ENCODE measurements at regions of chr12 and their contacts with region 1.

Region 1: DNA sequence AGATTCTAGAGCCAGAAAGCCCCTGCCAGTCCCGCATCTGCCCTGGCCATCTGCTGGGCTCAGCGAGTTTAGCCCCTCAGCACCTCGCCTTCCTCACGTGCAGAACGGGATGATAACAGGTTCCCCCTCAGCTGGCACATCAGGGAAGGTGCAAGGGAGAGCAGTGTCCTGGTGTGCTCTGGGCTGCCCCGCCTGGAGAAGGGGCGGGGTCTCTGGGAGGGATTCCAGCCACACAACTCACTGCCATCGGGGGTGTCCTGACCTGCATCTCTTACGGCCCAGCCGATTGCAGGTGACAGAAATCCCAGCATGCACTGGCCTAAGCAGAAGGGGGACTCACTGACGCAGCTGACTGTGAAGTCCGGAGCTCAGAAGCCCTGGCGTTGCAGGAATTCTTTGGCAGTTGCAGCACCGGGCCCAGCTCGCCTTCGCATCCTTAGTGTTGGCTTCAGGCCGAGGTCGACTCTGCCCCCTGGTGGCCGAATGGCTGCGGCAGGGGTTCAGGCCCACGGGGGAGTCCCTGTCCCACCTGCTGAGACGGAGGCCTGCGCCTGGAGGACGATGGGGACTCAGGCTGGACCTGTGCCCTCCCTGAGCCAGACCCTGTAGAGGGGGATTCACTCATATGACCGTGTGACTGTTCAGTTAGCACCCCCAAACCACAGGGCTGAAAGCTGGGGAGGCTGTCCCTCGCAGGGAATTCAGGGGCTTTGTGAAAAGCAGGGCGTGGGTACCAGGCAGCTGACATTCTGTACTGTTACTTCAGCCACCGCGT is 178.6 kb downstream of the ADGRD1 start:
- DNase-seq: peak; percentile 55 to 86 (median 70)
- ATAC-seq: peak; percentile 69
- H3K4me3 ChIP-seq: no peak overlapping the region
- H3K4me3 Mint-ChIP-seq: no peak overlapping the region
- H3K27ac ChIP-seq: no peak overlapping the region
- H3K27ac Mint-ChIP-seq: no peak overlapping the region
- H3K4me1 ChIP-seq: no peaks in the 10 kb centered on the region
- H3K4me1 Mint-ChIP-seq: peaks cover 2% of the 10 kb centered on the region
- H3K27me3 ChIP-seq: no peaks in the 10 kb centered on the region
- H3K27me3 Mint-ChIP-seq: peaks cover 5% of the 10 kb centered on the region
- CTCF ChIP-seq: peak; percentile 76

Region 2: DNA sequence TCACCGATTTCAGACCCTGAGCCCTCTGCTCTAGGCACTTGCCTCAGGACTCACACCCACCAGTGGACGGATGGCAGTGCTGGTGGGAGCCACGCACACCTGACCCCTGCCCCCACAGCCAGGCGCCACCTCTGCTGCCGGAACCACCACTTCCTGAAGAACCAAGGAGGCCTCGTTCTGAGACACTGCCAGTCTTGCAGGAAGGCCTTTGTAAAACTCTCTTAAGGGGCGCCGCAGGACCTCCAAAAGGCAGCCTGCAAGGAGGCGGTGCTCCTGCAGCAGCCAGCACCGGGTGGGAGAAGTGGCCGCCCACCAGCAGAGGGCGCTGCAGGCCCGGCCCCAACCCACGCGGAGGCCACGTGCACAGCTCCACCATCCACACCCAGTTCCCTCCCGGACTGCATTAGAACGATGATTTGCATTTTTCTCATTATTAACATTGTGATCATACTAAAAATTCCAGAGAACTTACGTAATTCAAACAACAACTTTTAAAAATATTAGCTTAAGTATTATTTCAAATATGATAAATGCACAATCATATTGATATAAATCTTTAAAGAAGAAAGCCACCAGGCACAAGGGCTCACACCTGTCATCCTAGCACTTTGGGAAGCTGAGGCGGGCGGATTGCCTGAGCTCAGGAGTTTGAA is 306.0 kb before region 1 on chr12:
- CTCF ChIA-PET with region 1: interaction called, 77 read pairs
- POLR2A ChIA-PET with region 1: no interaction called
- intact Hi-C with region 1: loop called in 1 of 2 experiments (anchors 1 kb)
- DNase-seq: peak; percentile 55 to 91 (median 79)
- ATAC-seq: peak; percentile 98
- H3K4me3 ChIP-seq: no peak overlapping the region
- H3K4me3 Mint-ChIP-seq: no peak overlapping the region
- H3K27ac ChIP-seq: peak overlapping the region in 1 of 2 experiments; percentile 8
- H3K27ac Mint-ChIP-seq: peak overlapping the region; percentile 74
- H3K4me1 ChIP-seq: peaks cover 9% of the 10 kb centered on the region
- H3K4me1 Mint-ChIP-seq: peaks cover 17% of the 10 kb centered on the region
- H3K27me3 ChIP-seq: no peaks in the 10 kb centered on the region
- H3K27me3 Mint-ChIP-seq: no peaks in the 10 kb centered on the region
- CTCF ChIP-seq: peak; percentile 87

Region 3: DNA sequence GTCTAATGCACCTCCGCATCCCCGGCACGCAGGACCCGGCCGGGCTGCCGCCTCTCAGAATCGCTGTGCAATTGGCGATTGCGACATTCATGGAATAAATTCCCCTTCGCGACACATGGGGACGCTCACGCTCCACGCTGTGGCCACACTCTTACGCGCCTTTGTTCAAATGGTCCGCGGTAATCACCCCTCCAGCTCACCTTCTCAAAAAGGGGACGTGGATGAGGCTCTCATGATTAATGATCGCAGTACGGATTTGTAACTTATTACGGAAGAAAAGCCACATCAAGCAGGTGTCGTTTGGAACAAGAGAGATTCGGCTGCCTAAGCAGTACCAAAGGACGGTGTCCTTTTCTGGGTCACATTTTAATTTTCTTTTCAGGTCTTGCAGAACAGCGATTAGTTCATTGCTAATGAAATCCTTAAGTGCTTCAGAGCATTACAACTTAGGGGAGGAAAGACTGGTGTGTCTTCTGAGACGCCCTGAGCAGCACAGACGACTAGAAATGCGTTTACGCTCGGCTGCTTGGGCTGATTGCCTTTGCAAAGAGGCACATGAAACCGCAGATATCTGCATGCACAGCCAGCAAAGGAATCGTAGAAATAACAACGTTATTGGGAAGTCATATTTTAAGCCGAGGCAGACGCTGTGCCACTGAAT is 215.9 kb before region 1 on chr12:
- CTCF ChIA-PET with region 1: no interaction called
- POLR2A ChIA-PET with region 1: no interaction called
- intact Hi-C with region 1: loop called in 1 of 2 experiments (anchors 10 kb)
- DNase-seq: peak in 2 of 9 experiments; percentile 20 to 28
- ATAC-seq: no peak
- H3K4me3 ChIP-seq: no peak overlapping the region
- H3K4me3 Mint-ChIP-seq: no peak overlapping the region
- H3K27ac ChIP-seq: no peak overlapping the region
- H3K27ac Mint-ChIP-seq: no peak overlapping the region
- H3K4me1 ChIP-seq: no peaks in the 10 kb centered on the region
- H3K4me1 Mint-ChIP-seq: peaks cover 2% of the 10 kb centered on the region
- H3K27me3 ChIP-seq: no peaks in the 10 kb centered on the region
- H3K27me3 Mint-ChIP-seq: peaks cover 56% of the 10 kb centered on the region
- CTCF ChIP-seq: no peak

Region 4: GRCh38 chr12:131116391-131117117 is 15.8 kb before region 1 on chr12:
- CTCF ChIA-PET with region 1: interaction called, 22 read pairs
- POLR2A ChIA-PET with region 1: no interaction called
- intact Hi-C with region 1: no loop called
- DNase-seq: no peak
- ATAC-seq: no peak
- H3K4me3 ChIP-seq: no peak overlapping the region
- H3K4me3 Mint-ChIP-seq: no peak overlapping the region
- H3K27ac ChIP-seq: no peak overlapping the region
- H3K27ac Mint-ChIP-seq: no peak overlapping the region
- H3K4me1 ChIP-seq: no peaks in the 10 kb centered on the region
- H3K4me1 Mint-ChIP-seq: no peaks in the 10 kb centered on the region
- H3K27me3 ChIP-seq: no peaks in the 10 kb centered on the region
- H3K27me3 Mint-ChIP-seq: peaks cover 2% of the 10 kb centered on the region
- CTCF ChIP-seq: no peak

Region 5: GRCh38 chr12:131152587-131152986 is 20.3 kb after region 1 on chr12:
- CTCF ChIA-PET with region 1: interaction called, 10 read pairs
- POLR2A ChIA-PET with region 1: no interaction called
- intact Hi-C with region 1: no loop called
- DNase-seq: peak in 1 of 9 experiments; percentile 32
- ATAC-seq: no peak
- H3K4me3 ChIP-seq: no peak overlapping the region
- H3K4me3 Mint-ChIP-seq: no peak overlapping the region
- H3K27ac ChIP-seq: no peak overlapping the region
- H3K27ac Mint-ChIP-seq: no peak overlapping the region
- H3K4me1 ChIP-seq: no peaks in the 10 kb centered on the region
- H3K4me1 Mint-ChIP-seq: no peaks in the 10 kb centered on the region
- H3K27me3 ChIP-seq: no peaks in the 10 kb centered on the region
- H3K27me3 Mint-ChIP-seq: peaks cover 22% of the 10 kb centered on the region
- CTCF ChIP-seq: no peak

Measured in CD8-positive, alpha-beta T cell (primary cell).